ENCODE measurements at regions of chr3 and their contacts with region 1.

Region 1: GRCh38 chr3:191321019-191321767 is 8.0 kb upstream of the CCDC50 start:
- DNase-seq: no peak
- ATAC-seq: no peak
- H3K4me3 ChIP-seq: no peak overlapping the region
- H3K27ac ChIP-seq: no peak overlapping the region
- H3K4me1 ChIP-seq: no peaks in the 10 kb centered on the region
- H3K27me3 ChIP-seq: no peaks in the 10 kb centered on the region

Region 2: DNA sequence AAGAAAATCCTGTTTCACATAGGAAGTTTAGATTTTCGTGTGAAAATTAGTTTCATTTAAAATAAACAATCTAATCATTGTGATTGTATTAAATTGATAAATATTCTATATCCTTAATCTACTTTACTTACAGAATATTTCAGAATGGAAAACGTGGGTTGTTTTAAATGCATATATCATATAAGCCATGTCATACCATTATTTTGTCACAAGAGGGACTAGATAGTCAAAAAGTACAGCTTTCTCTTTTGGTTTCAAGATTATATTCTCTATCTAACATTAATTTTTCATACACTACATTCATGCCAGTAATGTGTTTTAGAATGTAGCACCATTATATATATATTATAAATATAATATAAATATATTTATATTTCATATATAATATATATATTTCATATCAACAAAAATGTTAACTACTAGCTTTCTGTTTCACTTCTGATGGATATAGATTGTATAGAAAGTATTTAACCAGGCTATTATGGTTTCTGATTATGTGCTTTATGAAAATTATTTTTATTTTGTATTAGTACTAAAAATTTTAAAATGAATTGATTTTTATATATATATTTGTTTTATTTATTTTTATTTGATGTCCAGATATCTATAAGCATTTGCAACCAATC is 76.8 kb before region 1 on chr3:
- intact Hi-C with region 1: loop called in 1 of 4 experiments (anchors 5 kb)
- DNase-seq: no peak
- ATAC-seq: no peak
- H3K4me3 ChIP-seq: no peak overlapping the region
- H3K27ac ChIP-seq: no peak overlapping the region
- H3K4me1 ChIP-seq: no peaks in the 10 kb centered on the region
- H3K27me3 ChIP-seq: no peaks in the 10 kb centered on the region

Region 3: GRCh38 chr3:191543897-191544296 is 222.7 kb after region 1 on chr3:
- intact Hi-C with region 1: no loop called
- DNase-seq: no peak
- ATAC-seq: no peak
- H3K4me3 ChIP-seq: no peak overlapping the region
- H3K27ac ChIP-seq: no peak overlapping the region
- H3K4me1 ChIP-seq: no peaks in the 10 kb centered on the region
- H3K27me3 ChIP-seq: no peaks in the 10 kb centered on the region

Region 4: DNA sequence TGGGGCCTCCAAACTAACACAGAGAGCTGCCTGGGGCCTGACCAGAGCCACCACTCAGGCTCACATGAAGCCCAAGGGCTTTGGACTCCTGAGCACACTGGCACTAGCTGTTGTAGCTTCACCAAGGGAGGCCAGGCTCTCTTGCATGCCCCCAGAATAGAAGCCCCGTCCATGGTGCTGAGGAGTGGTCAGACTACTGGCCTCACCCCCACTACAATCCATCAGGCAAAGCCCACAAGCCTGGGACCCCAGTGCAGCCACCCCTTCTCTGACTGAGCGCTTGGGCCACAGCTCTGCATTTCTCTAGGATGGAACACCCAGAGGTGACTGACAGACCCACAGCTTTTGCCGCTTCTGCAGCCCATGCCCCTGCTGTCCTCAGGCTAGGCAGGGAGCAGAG is 320.6 kb after region 1 on chr3:
- intact Hi-C with region 1: no loop called
- DNase-seq: no peak
- ATAC-seq: no peak
- H3K4me3 ChIP-seq: no peak overlapping the region
- H3K27ac ChIP-seq: no peak overlapping the region
- H3K4me1 ChIP-seq: no peaks in the 10 kb centered on the region
- H3K27me3 ChIP-seq: no peaks in the 10 kb centered on the region

Region 5: GRCh38 chr3:193096076-193096475 is 1774.9 kb after region 1 on chr3:
- intact Hi-C with region 1: no loop called
- DNase-seq: no peak
- ATAC-seq: no peak
- H3K4me3 ChIP-seq: no peak overlapping the region
- H3K27ac ChIP-seq: no peak overlapping the region
- H3K4me1 ChIP-seq: no peaks in the 10 kb centered on the region
- H3K27me3 ChIP-seq: no peaks in the 10 kb centered on the region

Measured in right cardiac atrium (tissue), 5 donors.